Activated CD4-positive, alpha-beta T cell treated with anti-CD3 and anti-CD28 coated beads for 36 hours (primary cell): ENCODE measurements at regions of chr10 and their contacts with region 1.

Region 1: GRCh38 chr10:132331526-132332432 is at the start of gene LRRC27:
- DNase-seq: peak; percentile 99
- ATAC-seq: peak; percentile 86
- H3K4me3 Mint-ChIP-seq: peak within 1 kb of the TSS; percentile 80
- H3K27ac Mint-ChIP-seq: peak within 1 kb of the TSS; percentile 81
- H3K4me1 Mint-ChIP-seq: peaks cover 56% of the 10 kb centered on the region
- H3K27me3 Mint-ChIP-seq: no peaks in the 10 kb centered on the region
- total RNA-seq, gene LRRC27: 3.6 to 4.1 TPM

Region 2: GRCh38 chr10:131814567-131815265 is 517.1 kb before region 1 on chr10:
- CTCF ChIA-PET with region 1: no interaction called
- POLR2A ChIA-PET with region 1: no interaction called
- intact Hi-C with region 1: no loop called
- DNase-seq: no peak
- ATAC-seq: no peak
- H3K4me3 Mint-ChIP-seq: no peak overlapping the region
- H3K27ac Mint-ChIP-seq: no peak overlapping the region
- H3K4me1 Mint-ChIP-seq: no peaks in the 10 kb centered on the region
- H3K27me3 Mint-ChIP-seq: peaks cover 5% of the 10 kb centered on the region

Region 3: DNA sequence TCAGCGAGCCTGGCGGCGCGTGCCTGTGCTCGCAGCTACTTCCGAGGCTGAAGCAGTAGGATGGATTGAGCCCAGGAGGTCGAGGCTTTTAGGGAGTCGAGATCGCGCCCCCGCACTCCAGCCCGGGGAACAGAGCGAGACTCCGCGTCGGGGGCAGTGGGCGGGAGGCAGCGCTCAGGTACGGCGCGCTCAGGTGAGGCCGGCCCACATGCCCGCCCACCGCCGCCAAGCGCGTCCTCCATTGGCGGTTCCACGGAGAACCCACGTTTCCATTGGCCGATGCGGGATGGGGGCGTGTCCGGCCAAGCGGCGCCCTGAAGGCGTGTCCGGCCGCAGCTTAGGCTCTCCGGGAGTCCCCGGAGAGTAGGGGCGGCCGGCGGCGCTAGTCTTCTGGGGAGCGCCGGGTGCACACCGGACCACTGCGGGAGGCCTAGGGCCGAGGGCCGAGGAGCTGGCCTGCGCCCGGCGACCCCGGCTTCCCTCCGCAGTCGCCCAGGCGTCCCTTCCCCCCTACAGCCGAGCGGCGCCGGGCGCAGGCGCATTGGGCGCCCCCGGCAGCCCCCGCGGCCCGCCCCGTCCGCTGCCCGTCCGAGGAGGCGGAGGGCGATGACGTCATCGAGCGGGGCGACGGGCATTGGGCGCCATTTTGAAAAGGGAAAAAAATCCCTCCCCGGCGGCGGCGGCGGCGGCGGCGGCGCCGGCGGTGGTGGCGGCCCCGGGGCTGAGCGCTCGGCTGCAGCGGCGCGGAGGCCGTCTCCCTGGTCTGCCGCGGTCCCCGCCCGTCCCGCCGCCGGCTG is 431.2 kb before region 1 on chr10 and contains the start of gene PPP2R2D:
- CTCF ChIA-PET with region 1: no interaction called
- POLR2A ChIA-PET with region 1: no interaction called
- intact Hi-C with region 1: loop called (anchors 5 kb)
- DNase-seq: peak; percentile 97
- ATAC-seq: peak; percentile 83
- H3K4me3 Mint-ChIP-seq: peak within 1 kb of the TSS; percentile 93
- H3K27ac Mint-ChIP-seq: peak within 1 kb of the TSS; percentile 92
- H3K4me1 Mint-ChIP-seq: peaks cover 53% of the 10 kb centered on the region
- H3K27me3 Mint-ChIP-seq: peaks cover 7% of the 10 kb centered on the region
- total RNA-seq, gene PPP2R2D: 30.0 to 39.3 TPM

Region 4: DNA sequence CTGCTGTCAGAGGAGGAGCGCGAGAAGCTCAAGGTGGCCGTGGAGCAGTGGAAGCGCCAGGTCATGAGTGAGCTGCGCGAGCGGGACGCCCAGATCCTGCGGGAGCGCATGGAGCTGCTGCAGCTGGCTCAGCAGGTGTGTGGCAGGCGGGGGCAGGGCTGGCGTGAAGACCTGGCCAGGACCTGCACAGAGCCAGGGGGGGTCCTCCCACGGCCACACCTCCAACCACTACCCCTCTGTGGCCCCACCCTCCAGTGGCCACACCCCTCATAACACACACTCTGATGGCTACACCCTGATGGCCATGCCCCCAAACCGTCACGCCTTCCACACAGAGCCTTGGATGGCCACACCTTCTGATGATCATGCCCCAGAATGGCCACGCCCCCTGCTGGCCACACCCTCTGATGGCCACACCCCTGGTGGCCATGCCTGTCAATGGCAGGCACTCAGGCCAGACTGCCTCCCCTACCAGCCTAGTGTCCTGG is 168.5 kb before region 1 on chr10:
- CTCF ChIA-PET with region 1: no interaction called
- POLR2A ChIA-PET with region 1: no interaction called
- intact Hi-C with region 1: loop called in 1 of 2 experiments (anchors 2 kb)
- DNase-seq: peak; percentile 84
- ATAC-seq: peak; percentile 78
- H3K4me3 Mint-ChIP-seq: no peak overlapping the region
- H3K27ac Mint-ChIP-seq: no peak overlapping the region
- H3K4me1 Mint-ChIP-seq: peaks cover 20% of the 10 kb centered on the region
- H3K27me3 Mint-ChIP-seq: no peaks in the 10 kb centered on the region

Region 5: GRCh38 chr10:132319853-132320669 is 11.7 kb before region 1 on chr10:
- CTCF ChIA-PET with region 1: interaction called, 3 read pairs
- POLR2A ChIA-PET with region 1: no interaction called
- intact Hi-C with region 1: loop called (anchors 1 kb)
- DNase-seq: peak; percentile 77
- ATAC-seq: peak; percentile 98
- H3K4me3 Mint-ChIP-seq: no peak overlapping the region
- H3K27ac Mint-ChIP-seq: peak overlapping the region; percentile 37
- H3K4me1 Mint-ChIP-seq: peaks cover 20% of the 10 kb centered on the region
- H3K27me3 Mint-ChIP-seq: no peaks in the 10 kb centered on the region

Region 6: DNA sequence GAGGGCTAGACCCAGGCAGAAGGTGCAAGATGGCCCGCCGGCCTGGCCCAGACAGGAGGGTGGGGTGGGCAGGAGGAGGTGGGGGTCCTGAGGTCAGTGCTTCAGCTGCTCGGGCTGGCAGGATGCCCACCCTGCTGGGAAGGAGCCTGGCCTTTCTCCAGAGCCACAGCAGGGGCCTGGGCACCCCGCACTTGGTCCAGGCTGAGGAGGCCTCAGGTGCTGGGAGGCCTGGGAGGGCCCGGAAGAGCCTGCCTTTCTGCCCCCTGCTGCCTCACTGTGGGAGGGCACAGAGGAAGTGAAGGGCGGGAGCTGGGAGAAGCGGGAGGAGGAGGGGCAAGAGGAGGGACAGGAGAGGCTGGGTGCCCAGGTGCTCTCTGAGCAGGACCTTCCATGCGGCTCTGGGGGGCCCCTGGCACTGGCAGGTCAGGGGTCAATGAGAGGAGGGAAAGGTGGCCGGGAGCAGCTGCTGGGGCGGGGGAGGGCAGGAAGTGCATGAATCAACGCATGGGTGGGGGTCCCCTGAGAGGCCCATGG is 114.9 kb after region 1 on chr10:
- CTCF ChIA-PET with region 1: interaction called, 3 read pairs
- POLR2A ChIA-PET with region 1: no interaction called
- intact Hi-C with region 1: loop called in 1 of 2 experiments (anchors 1 kb)
- DNase-seq: peak; percentile 90
- ATAC-seq: peak; percentile 76
- H3K4me3 Mint-ChIP-seq: peak overlapping the region; percentile 78
- H3K27ac Mint-ChIP-seq: peak overlapping the region; percentile 99
- H3K4me1 Mint-ChIP-seq: peaks cover 35% of the 10 kb centered on the region
- H3K27me3 Mint-ChIP-seq: no peaks in the 10 kb centered on the region